ENCODE measurements at regions of chr14 and their contacts with region 1.

Region 1: DNA sequence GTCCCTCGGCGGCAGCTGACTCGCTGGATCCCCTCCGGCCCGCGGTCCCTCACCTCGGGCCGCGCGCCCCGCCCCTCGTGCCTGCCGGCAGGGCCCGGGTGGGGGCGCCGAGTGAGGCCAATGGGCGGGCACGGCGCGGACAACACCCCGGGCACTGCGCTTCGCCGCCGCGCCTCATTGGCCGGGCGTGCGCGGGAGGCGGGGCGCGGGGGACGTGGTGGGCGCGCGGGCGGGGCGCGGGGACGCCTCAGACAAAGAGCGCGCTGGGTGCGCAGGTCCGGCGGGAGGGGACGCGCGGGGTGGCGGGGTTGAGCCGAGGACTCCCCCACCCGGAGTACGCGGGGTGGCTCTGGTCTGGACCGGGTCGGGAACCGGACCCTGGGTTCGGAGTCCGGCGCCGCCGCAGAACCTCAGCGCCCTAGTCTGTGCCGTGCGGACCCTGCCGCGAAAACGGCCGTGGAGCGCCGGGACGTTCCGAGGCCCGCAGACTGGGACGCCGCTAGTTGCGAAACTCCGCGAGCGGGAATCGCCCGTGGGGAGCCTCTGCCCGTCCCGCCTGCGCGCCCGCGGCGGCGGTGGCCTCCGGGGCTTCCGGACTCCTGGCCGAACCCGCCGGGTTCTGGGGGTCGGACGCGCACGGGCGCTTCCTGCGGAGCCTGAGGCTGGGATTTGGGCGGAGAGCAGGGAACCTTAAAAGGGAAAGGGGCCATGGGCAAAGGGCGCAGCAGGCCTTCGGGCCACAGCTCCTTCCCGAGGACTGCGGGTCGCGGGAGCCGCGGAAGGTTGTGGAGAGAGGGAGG is at the start of gene SLC25A29:
- DNase-seq: peak; percentile 89
- H3K4me3 ChIP-seq: peak within 1 kb of the TSS; percentile 71 to 97 (median 82)
- H3K27ac ChIP-seq: peak within 1 kb of the TSS; percentile 88 to 93 (median 90)
- H3K4me1 ChIP-seq: peaks cover 10 to 44% (median 25%) of the 10 kb centered on the region in 4 donors
- H3K27me3 ChIP-seq: no peaks in the 10 kb centered on the region
- CTCF ChIP-seq: no peak
- EP300 ChIP-seq: no peak
- POLR2A ChIP-seq: peak; percentile 63
- total RNA-seq, gene SLC25A29: 16.8 to 62.7 (median 19.7) TPM

Region 2: GRCh38 chr14:100341301-100342031 is 34.8 kb after region 1 on chr14:
- in situ Hi-C with region 1: no loop called
- intact Hi-C with region 1: loop called (anchors 2 kb)
- DNase-seq: no peak
- H3K4me3 ChIP-seq: no peak overlapping the region
- H3K27ac ChIP-seq: peak overlapping the region; percentile 56 to 78 (median 74)
- H3K4me1 ChIP-seq: peaks cover 0 to 22% (median 12%) of the 10 kb centered on the region in 4 donors
- H3K27me3 ChIP-seq: no peaks in the 10 kb centered on the region
- CTCF ChIP-seq: no peak
- EP300 ChIP-seq: no peak
- POLR2A ChIP-seq: no peak

Region 3: DNA sequence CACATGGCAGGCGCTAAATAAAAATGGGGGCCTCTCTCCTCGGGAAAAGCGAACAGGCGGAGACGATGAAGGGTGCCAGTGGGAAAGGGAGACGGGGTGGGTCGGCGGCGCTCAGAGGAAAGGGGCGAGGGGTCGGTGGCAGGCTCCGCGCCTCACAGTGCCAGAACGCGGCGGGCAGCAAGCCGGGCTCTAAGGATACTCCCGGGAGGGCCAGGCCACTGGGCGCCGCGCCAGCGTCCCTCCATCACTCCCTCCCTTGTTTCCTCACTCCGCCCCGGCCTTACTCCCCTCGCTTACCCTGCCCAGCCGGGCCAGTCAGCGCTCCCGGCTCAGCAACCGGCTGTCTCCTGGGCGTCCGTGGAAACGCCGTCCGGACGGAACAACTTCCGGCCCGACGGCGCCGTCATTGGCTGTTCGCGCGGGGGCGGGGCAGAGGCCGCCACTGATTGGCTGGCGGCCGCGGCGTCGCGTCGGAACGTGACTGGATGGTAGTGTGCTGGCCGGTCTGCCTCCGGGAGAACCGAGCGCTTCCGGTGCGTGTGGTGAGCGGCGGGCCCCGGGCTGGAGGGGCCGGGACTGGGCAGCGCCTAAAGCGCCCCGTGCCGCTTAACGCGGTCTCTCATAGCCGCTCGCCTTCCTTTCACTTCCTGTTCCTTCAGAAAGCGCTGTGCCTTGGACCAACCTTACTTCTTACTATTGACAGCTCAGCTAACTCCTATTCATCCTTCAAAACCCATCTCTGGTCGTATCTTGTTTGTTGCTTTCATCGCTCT is 69.5 kb after region 1 on chr14:
- in situ Hi-C with region 1: no loop called
- intact Hi-C with region 1: loop called (anchors 5 kb)
- DNase-seq: peak; percentile 95
- H3K4me3 ChIP-seq: peak within 1 kb of the TSS; percentile 62 to 79 (median 74)
- H3K27ac ChIP-seq: peak within 1 kb of the TSS; percentile 91 to 97 (median 92)
- H3K4me1 ChIP-seq: peaks cover 10 to 36% (median 17%) of the 10 kb centered on the region in 4 donors
- H3K27me3 ChIP-seq: no peaks in the 10 kb centered on the region
- CTCF ChIP-seq: no peak
- EP300 ChIP-seq: no peak
- POLR2A ChIP-seq: peak; percentile 82

Region 4: GRCh38 chr14:100522616-100523099 is 216.0 kb after region 1 on chr14:
- in situ Hi-C with region 1: no loop called
- intact Hi-C with region 1: no loop called
- DNase-seq: no peak
- H3K4me3 ChIP-seq: no peak overlapping the region
- H3K27ac ChIP-seq: no peak overlapping the region
- H3K4me1 ChIP-seq: peaks cover 0 to 5% (median 2%) of the 10 kb centered on the region in 4 donors
- H3K27me3 ChIP-seq: no peaks in the 10 kb centered on the region
- CTCF ChIP-seq: no peak
- EP300 ChIP-seq: no peak
- POLR2A ChIP-seq: no peak